Natural killer cell (primary cell): ENCODE measurements at regions of chr19 and their contacts with region 1.

Region 1: GRCh38 chr19:48333467-48334384 is 8.4 kb downstream of the EMP3 start:
- DNase-seq: peak; percentile 93 to 97
- ATAC-seq: peak; percentile 67 to 85 (median 67)
- H3K4me3 ChIP-seq: peak overlapping the region; percentile 80
- H3K4me3 Mint-ChIP-seq: peak overlapping the region; percentile 99
- H3K27ac ChIP-seq: peak overlapping the region; percentile 98
- H3K27ac Mint-ChIP-seq: peak overlapping the region; percentile 100
- H3K4me1 ChIP-seq: peaks cover 55% of the 10 kb centered on the region
- H3K4me1 Mint-ChIP-seq: peaks cover 53 to 56% of the 10 kb centered on the region in 2 donors
- H3K27me3 ChIP-seq: no peaks in the 10 kb centered on the region
- H3K27me3 Mint-ChIP-seq: no peaks in the 10 kb centered on the region
- CTCF ChIP-seq: peak; percentile 82

Region 2: GRCh38 chr19:48271531-48272151 is 62.1 kb before region 1 on chr19:
- intact Hi-C with region 1: loop called (anchors 1 kb)
- DNase-seq: peak in 1 of 2 donors; percentile 26
- ATAC-seq: peak; percentile 38 to 55 (median 41)
- H3K4me3 ChIP-seq: peak overlapping the region; percentile 42
- H3K4me3 Mint-ChIP-seq: peak overlapping the region; percentile 83
- H3K27ac ChIP-seq: no peak overlapping the region
- H3K27ac Mint-ChIP-seq: peak overlapping the region in 1 of 2 donors; percentile 70
- H3K4me1 ChIP-seq: peaks cover 16% of the 10 kb centered on the region
- H3K4me1 Mint-ChIP-seq: peaks cover 12 to 24% of the 10 kb centered on the region in 2 donors
- H3K27me3 ChIP-seq: no peaks in the 10 kb centered on the region
- H3K27me3 Mint-ChIP-seq: peaks cover 0 to 8% of the 10 kb centered on the region in 2 donors
- CTCF ChIP-seq: no peak

Region 3: GRCh38 chr19:48308631-48309586 is 24.8 kb before region 1 on chr19:
- intact Hi-C with region 1: loop called (anchors 1 kb)
- DNase-seq: no peak
- ATAC-seq: no peak
- H3K4me3 ChIP-seq: no peak overlapping the region
- H3K4me3 Mint-ChIP-seq: no peak overlapping the region
- H3K27ac ChIP-seq: no peak overlapping the region
- H3K27ac Mint-ChIP-seq: no peak overlapping the region
- H3K4me1 ChIP-seq: no peaks in the 10 kb centered on the region
- H3K4me1 Mint-ChIP-seq: no peaks in the 10 kb centered on the region
- H3K27me3 ChIP-seq: no peaks in the 10 kb centered on the region
- H3K27me3 Mint-ChIP-seq: no peaks in the 10 kb centered on the region
- CTCF ChIP-seq: no peak

Region 4: GRCh38 chr19:48321622-48322591 is 11.8 kb before region 1 on chr19:
- intact Hi-C with region 1: loop called (anchors 1 kb)
- DNase-seq: peak; percentile 99 to 100
- ATAC-seq: peak; percentile 65 to 91 (median 77)
- H3K4me3 ChIP-seq: peak overlapping the region; percentile 73
- H3K4me3 Mint-ChIP-seq: peak overlapping the region; percentile 95
- H3K27ac ChIP-seq: peak overlapping the region; percentile 99
- H3K27ac Mint-ChIP-seq: peak overlapping the region; percentile 99 to 100
- H3K4me1 ChIP-seq: peaks cover 63% of the 10 kb centered on the region
- H3K4me1 Mint-ChIP-seq: peaks cover 55 to 68% of the 10 kb centered on the region in 2 donors
- H3K27me3 ChIP-seq: no peaks in the 10 kb centered on the region
- H3K27me3 Mint-ChIP-seq: no peaks in the 10 kb centered on the region
- CTCF ChIP-seq: no peak

Region 5: GRCh38 chr19:48468775-48469288 is 135.1 kb after region 1 on chr19:
- intact Hi-C with region 1: loop called (anchors 2 kb)
- DNase-seq: peak; percentile 99 to 100
- ATAC-seq: peak; percentile 88 to 97 (median 88)
- H3K4me3 ChIP-seq: peak overlapping the region; percentile 92
- H3K4me3 Mint-ChIP-seq: peak overlapping the region; percentile 97
- H3K27ac ChIP-seq: peak overlapping the region; percentile 77
- H3K27ac Mint-ChIP-seq: peak overlapping the region; percentile 84 to 88
- H3K4me1 ChIP-seq: peaks cover 25% of the 10 kb centered on the region
- H3K4me1 Mint-ChIP-seq: peaks cover 6 to 47% of the 10 kb centered on the region in 2 donors
- H3K27me3 ChIP-seq: no peaks in the 10 kb centered on the region
- H3K27me3 Mint-ChIP-seq: no peaks in the 10 kb centered on the region
- CTCF ChIP-seq: no peak